ENCODE measurements at regions of chr3 and their contacts with region 1.

Region 1: DNA sequence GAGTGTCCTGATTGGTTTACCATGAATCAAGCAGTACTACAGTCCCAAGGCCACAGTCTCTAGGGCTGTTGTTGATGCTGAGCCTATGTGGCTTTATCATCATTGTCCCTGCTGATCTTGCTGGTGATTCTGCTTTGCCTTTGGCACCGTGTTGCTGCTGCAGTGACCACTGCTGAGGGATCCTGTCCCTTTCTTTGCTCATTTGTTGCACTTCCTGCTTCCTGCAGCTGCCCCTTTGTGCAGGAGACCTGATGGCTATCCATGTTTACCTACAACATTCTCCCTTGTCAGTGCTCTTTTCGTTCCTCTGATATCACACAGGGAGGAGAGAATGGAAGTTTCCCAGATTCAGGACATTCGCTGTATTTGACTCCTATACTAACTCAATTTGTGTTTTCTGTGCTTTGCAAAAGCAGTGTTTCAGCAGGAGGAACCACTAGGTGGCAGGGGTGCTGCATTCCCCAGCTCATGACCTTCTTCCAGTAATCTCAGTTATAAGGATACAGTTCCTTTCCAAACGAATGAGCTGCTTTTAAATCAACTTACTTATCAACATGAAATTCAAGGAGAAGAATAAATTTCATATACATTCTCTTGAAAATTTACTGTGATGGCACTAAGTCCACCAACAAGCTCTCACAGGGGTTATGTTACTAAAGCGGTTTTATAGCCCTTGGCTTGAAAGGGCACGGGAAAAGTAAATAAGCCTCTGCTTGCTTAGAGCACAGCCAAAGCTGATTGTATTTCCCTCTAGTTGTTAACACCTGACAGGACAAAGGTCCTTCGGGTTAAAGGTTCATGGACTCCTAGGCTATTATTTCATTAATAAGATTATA is 9.7 kb upstream of the THUMPD3 start:
- DNase-seq: peak; percentile 71 to 72
- ATAC-seq: peak; percentile 88 to 95
- H3K4me3 ChIP-seq: no peak overlapping the region
- H3K27ac ChIP-seq: no peak overlapping the region
- H3K4me1 ChIP-seq: peaks cover 26% of the 10 kb centered on the region
- CTCF ChIP-seq: peak; percentile 97
- EP300 ChIP-seq: no peak
- POLR2A ChIP-seq: no peak
- RAD21 ChIP-seq: peak; percentile 90 to 92

Region 2: DNA sequence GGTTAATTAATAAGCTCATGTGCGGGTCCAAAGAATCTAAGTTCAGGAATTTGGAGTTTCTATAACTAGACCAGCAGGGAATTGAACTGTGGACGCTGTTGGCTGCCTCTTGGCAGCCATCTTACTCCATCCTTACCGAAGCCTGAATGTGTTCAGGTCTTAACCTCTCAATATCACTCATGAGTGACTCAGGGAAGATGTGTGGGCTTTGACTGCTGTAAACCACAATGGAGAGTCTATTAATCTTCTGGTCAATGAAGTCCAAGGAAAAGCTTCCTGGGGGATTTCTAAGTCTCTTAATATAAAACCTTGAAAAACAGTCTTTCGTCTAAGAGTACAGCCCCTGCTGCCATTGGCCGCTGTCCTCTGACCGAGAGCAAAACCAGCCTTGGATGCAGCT is 537.0 kb before region 1 on chr3:
- CTCF ChIA-PET with region 1: no interaction called
- POLR2A ChIA-PET with region 1: no interaction called
- DNase-seq: no peak
- ATAC-seq: no peak
- H3K4me3 ChIP-seq: no peak overlapping the region
- H3K27ac ChIP-seq: no peak overlapping the region
- H3K4me1 ChIP-seq: no peaks in the 10 kb centered on the region
- CTCF ChIP-seq: no peak
- EP300 ChIP-seq: no peak
- POLR2A ChIP-seq: no peak
- RAD21 ChIP-seq: no peak

Region 3: DNA sequence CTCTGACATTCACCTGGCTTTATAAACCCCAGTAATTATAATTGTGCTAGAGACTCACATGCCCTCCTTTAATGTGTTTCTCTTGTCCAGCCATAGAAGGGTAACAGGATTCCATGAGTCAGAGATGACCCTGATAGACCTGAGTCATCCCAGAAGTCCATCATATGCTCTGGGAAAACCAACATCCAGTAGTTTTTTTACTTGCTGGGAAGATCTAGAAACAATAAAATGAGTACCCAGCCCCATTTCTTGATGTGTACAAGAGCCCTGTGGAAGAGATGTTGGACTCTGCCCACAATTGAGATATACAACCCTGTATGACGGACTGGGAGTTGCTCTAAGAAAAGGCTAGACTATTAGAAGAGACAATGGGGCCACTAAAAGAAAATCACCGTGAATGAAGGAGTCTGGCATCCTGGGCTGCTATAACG is 12.6 kb before region 1 on chr3:
- CTCF ChIA-PET with region 1: interaction called, 16 read pairs
- POLR2A ChIA-PET with region 1: no interaction called
- DNase-seq: peak; percentile 30 to 62
- ATAC-seq: peak; percentile 88 to 93
- H3K4me3 ChIP-seq: no peak overlapping the region
- H3K27ac ChIP-seq: peak overlapping the region in 1 of 2 experiments; percentile 56; a peak in 3 of 6 replicates
- H3K4me1 ChIP-seq: peaks cover 17% of the 10 kb centered on the region
- CTCF ChIP-seq: no peak
- EP300 ChIP-seq: no peak
- POLR2A ChIP-seq: no peak
- RAD21 ChIP-seq: no peak

Region 4: DNA sequence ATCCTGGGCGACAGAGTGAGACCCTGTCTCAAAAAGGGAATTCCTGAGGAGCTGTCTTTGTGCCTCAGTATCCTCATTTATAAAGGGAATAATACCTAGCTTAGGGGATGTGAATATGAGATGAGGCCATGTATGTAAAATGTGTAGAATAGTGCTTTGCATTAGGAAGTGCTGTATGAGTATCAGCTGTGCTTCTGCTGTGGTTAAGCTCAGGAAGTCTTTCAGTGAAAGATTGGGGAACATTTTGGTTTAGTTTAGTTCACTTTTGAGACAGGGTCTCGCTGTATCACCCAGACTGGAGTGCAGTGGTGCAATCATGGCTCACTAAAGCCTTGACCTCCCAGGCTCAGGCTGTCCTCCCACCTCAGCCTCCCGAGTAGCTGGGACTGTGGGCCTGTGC is 20.3 kb after region 1 on chr3:
- CTCF ChIA-PET with region 1: interaction called, 11 read pairs
- POLR2A ChIA-PET with region 1: no interaction called
- DNase-seq: no peak
- ATAC-seq: no peak
- H3K4me3 ChIP-seq: no peak overlapping the region
- H3K27ac ChIP-seq: no peak overlapping the region
- H3K4me1 ChIP-seq: no peaks in the 10 kb centered on the region
- CTCF ChIP-seq: no peak
- EP300 ChIP-seq: no peak
- POLR2A ChIP-seq: no peak
- RAD21 ChIP-seq: no peak

Region 5: GRCh38 chr3:9422712-9423424 is 69.7 kb after region 1 on chr3:
- CTCF ChIA-PET with region 1: interaction called, 13 read pairs
- POLR2A ChIA-PET with region 1: no interaction called
- DNase-seq: peak; percentile 60 to 90
- ATAC-seq: peak; percentile 94 to 96
- H3K4me3 ChIP-seq: peak overlapping the region; percentile 18; the same call in 1 of the 3 replicates
- H3K27ac ChIP-seq: peak overlapping the region; percentile 85 to 87
- H3K4me1 ChIP-seq: peaks cover 68% of the 10 kb centered on the region
- CTCF ChIP-seq: peak; percentile 60
- EP300 ChIP-seq: no peak
- POLR2A ChIP-seq: no peak
- RAD21 ChIP-seq: peak; percentile 59 to 61

Region 6: GRCh38 chr3:9623148-9623547 is 270.0 kb after region 1 on chr3:
- CTCF ChIA-PET with region 1: no interaction called
- POLR2A ChIA-PET with region 1: no interaction called
- DNase-seq: no peak
- ATAC-seq: peak; percentile 42 to 56; a peak in 4 of 6 replicates
- H3K4me3 ChIP-seq: no peak overlapping the region
- H3K27ac ChIP-seq: no peak overlapping the region
- H3K4me1 ChIP-seq: no peaks in the 10 kb centered on the region
- CTCF ChIP-seq: no peak
- EP300 ChIP-seq: no peak
- POLR2A ChIP-seq: no peak
- RAD21 ChIP-seq: no peak

Measured in A549 (cell line).